Activated CD8-positive, alpha-beta T cell treated with anti-CD3 and anti-CD28 coated beads, Interleukin-2, amount 10 ng/mL, durations not matched to agents 7 days and 5 days (primary cell): ENCODE measurements at regions of chr1 and their contacts with region 1.

Region 1: GRCh38 chr1:51897699-51898031 is 19.1 kb upstream of the NRDC start:
- DNase-seq: no peak
- ATAC-seq: no peak
- H3K4me3 Mint-ChIP-seq: no peak overlapping the region
- H3K27ac Mint-ChIP-seq: no peak overlapping the region
- H3K4me1 Mint-ChIP-seq: peaks cover 2% of the 10 kb centered on the region
- H3K27me3 Mint-ChIP-seq: peaks cover 34% of the 10 kb centered on the region

Region 2: GRCh38 chr1:51535006-51535592 is 362.6 kb before region 1 on chr1:
- CTCF ChIA-PET with region 1: no interaction called
- POLR2A ChIA-PET with region 1: no interaction called
- DNase-seq: peak; percentile 50
- ATAC-seq: peak; percentile 19
- H3K4me3 Mint-ChIP-seq: no peak overlapping the region
- H3K27ac Mint-ChIP-seq: no peak overlapping the region
- H3K4me1 Mint-ChIP-seq: peaks cover 9% of the 10 kb centered on the region
- H3K27me3 Mint-ChIP-seq: peaks cover 2% of the 10 kb centered on the region

Region 3: GRCh38 chr1:51776408-51776807 is 121.3 kb before region 1 on chr1:
- CTCF ChIA-PET with region 1: no interaction called
- POLR2A ChIA-PET with region 1: no interaction called
- DNase-seq: no peak
- ATAC-seq: no peak
- H3K4me3 Mint-ChIP-seq: no peak overlapping the region
- H3K27ac Mint-ChIP-seq: peak overlapping the region; percentile 39
- H3K4me1 Mint-ChIP-seq: peaks cover 9% of the 10 kb centered on the region
- H3K27me3 Mint-ChIP-seq: no peaks in the 10 kb centered on the region

Region 4: GRCh38 chr1:51878616-51879336 is 18.9 kb before region 1 on chr1 and contains the start of gene NRDC:
- CTCF ChIA-PET with region 1: interaction called, 22 read pairs
- POLR2A ChIA-PET with region 1: interaction called, 3 read pairs
- DNase-seq: peak; percentile 100
- ATAC-seq: peak; percentile 95
- H3K4me3 Mint-ChIP-seq: no peak within 1 kb of the TSS
- H3K27ac Mint-ChIP-seq: no peak within 1 kb of the TSS
- H3K4me1 Mint-ChIP-seq: peaks cover 34% of the 10 kb centered on the region
- H3K27me3 Mint-ChIP-seq: peaks cover 11% of the 10 kb centered on the region
- total RNA-seq, gene NRDC: 153 to 157 TPM

Region 5: GRCh38 chr1:51910221-51911000 is 12.7 kb after region 1 on chr1:
- CTCF ChIA-PET with region 1: interaction called, 13 read pairs
- POLR2A ChIA-PET with region 1: no interaction called
- DNase-seq: no peak
- ATAC-seq: no peak
- H3K4me3 Mint-ChIP-seq: no peak overlapping the region
- H3K27ac Mint-ChIP-seq: no peak overlapping the region
- H3K4me1 Mint-ChIP-seq: peaks cover 12% of the 10 kb centered on the region
- H3K27me3 Mint-ChIP-seq: peaks cover 20% of the 10 kb centered on the region

Region 6: GRCh38 chr1:52002038-52002917 is 104.6 kb after region 1 on chr1:
- CTCF ChIA-PET with region 1: interaction called, 23 read pairs
- POLR2A ChIA-PET with region 1: no interaction called
- DNase-seq: peak; percentile 80
- ATAC-seq: peak; percentile 90
- H3K4me3 Mint-ChIP-seq: no peak overlapping the region
- H3K27ac Mint-ChIP-seq: no peak overlapping the region
- H3K4me1 Mint-ChIP-seq: no peaks in the 10 kb centered on the region
- H3K27me3 Mint-ChIP-seq: peaks cover 24% of the 10 kb centered on the region